PC-9 (cell line): ENCODE measurements at regions of chr1 and their contacts with region 1.

Region 1: DNA sequence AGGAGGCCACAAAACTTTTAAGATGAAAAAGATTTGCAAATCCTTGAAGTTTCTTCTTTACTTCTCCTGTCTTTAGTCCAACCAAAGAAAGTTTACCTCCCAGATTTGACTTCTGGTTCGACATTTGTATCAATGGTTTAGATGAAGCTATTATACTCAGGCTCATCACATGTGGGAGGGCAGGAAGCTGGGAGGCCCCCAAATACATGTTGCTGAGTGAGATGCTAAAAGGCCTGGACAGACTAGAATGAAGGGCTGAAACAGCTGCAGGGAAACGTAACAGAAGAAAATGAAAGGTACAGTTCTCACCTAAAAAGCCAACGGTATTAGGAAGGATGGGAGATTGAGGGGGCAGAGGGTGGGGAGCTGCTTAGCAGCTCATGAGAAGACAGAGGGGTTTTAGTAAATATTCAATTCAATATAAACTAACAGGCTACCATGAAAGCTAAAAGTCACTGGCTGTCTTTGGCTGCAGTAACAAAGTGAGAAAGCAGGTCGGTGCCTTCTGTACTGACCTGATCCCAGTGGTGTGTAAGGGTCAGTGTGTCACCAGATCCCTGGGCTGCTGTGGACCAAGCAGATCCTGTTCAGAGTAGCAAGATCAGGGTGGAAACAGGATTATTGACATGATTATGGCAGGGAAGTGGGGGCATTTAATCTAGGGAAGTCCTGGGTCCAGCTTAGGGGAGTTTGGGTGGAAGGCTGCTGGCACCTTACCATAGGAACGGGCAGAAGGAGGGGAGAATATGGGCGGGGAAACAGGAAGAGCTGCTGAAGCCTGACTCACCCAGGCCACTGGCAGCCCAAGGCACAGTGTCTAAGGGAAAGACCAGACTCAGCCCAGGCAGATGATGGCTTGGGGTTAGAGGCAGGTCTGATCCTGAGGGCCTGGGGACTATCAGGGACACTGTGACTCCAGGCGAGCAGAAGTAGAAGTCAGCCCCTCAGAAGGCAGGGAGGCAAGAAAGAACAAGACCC is 60.4 kb downstream of the KCNN3 start:
- DNase-seq: peak in 1 of 2 experiments; percentile 40
- H3K4me3 ChIP-seq: no peak overlapping the region
- H3K27ac ChIP-seq: no peak overlapping the region
- H3K4me1 ChIP-seq: no peaks in the 10 kb centered on the region
- H3K27me3 ChIP-seq: peaks cover 83% of the 10 kb centered on the region
- CTCF ChIP-seq: no peak

Region 2: DNA sequence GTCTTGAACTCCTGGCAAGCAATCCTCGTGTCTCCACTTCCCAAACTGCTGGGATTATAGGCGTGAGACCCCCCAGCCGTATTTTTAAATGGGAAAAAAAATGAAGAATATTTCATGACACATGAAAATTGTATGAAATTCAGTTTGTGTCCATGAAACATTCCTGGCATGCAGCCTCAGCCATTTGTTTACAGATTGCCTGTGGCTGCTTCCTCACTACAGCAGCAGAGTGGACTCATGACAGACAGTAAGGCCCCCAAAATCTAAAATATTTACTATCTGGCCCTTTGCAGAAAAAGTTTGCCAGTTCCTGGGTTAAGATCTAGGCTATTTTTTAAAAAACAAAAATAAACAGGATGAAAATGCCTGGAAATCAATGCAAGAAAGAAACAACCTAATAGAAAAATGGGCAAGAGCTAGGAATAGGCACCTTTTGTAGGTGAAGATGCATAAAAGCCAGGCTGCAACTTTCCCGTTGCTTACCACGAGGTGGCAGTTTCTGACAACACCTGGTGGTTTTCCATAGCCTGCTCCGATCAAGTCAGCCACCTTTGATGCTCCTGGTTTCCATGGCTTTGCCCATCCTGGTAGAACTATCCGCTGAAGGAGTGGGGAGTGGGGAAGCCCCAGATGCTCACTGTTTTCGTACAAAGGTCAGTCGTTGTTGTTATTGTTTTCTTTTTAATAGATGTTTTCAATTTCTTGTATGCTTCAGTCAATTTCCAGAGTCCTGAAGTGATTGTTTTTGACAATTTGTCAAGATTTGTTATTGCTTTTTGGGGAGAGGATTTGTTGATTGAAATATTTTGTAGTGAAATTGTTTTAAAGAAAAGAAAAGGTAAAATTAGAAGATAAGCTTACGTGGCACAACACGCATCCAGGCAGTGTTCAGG is 275.5 kb before region 1 on chr1:
- CTCF ChIA-PET with region 1: interaction called, 12 read pairs
- POLR2A ChIA-PET with region 1: no interaction called
- intact Hi-C with region 1: no loop called
- DNase-seq: peak; percentile 39 to 47
- H3K4me3 ChIP-seq: no peak overlapping the region
- H3K27ac ChIP-seq: no peak overlapping the region
- H3K4me1 ChIP-seq: no peaks in the 10 kb centered on the region
- H3K27me3 ChIP-seq: peaks cover 46% of the 10 kb centered on the region
- CTCF ChIP-seq: peak; percentile 70